Prostate gland (tissue), 2 donors: ENCODE measurements at regions of chr12 and their contacts with region 1.

Region 1: DNA sequence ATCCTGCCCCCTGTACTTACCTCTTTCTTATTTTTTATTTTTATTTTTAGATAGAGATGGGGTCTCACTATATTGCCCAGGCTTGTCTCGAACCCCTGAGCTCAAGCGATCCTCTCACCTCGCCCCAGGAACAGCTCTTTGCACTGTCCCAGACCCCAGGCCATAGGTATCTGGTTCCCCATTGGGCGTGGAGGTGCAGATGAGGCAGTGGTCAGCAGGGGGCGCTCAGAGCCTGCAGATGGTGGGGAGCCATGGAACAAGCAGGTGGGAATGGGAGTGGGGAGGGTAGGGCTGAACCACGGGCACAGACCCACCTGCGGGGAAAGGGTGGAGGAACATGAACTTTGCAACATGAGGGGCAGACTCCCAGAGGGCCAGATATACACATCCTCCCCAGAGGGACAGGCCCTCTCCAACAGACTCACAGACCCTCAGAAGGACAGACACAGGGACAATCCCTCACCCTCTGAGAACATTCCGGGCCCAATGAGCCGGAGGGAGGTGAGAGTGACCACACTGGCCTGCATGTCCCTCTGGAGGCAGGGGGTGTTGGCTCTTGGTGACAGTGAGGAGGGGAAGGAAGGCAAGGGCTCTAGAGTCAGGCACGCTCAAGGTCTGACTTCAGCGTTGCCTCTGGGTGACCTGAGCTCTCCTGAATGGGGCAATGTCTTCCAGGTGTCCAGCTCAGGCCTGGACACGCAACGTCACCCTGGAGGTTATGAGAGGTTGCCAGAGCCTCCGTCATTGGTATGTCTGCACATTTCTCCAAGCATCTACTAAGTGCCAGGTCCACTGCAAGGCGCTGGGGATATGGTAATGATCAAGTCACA is 34.9 kb downstream of the KRT80 start:
- DNase-seq: peak; percentile 77
- H3K4me3 ChIP-seq: no peak overlapping the region
- H3K27ac ChIP-seq: no peak overlapping the region
- H3K4me1 ChIP-seq: no peaks in the 10 kb centered on the region
- H3K27me3 ChIP-seq: no peaks in the 10 kb centered on the region
- CTCF ChIP-seq: peak; percentile 91 to 98 (median 94)
- POLR2A ChIP-seq: no peak

Region 2: GRCh38 chr12:52327052-52327829 is 170.3 kb after region 1 on chr12:
- intact Hi-C with region 1: loop called (anchors 2 kb)
- DNase-seq: peak; percentile 86
- H3K4me3 ChIP-seq: no peak overlapping the region
- H3K27ac ChIP-seq: no peak overlapping the region
- H3K4me1 ChIP-seq: no peaks in the 10 kb centered on the region
- H3K27me3 ChIP-seq: no peaks in the 10 kb centered on the region
- CTCF ChIP-seq: peak; percentile 59 to 94 (median 88)
- POLR2A ChIP-seq: no peak

Region 3: DNA sequence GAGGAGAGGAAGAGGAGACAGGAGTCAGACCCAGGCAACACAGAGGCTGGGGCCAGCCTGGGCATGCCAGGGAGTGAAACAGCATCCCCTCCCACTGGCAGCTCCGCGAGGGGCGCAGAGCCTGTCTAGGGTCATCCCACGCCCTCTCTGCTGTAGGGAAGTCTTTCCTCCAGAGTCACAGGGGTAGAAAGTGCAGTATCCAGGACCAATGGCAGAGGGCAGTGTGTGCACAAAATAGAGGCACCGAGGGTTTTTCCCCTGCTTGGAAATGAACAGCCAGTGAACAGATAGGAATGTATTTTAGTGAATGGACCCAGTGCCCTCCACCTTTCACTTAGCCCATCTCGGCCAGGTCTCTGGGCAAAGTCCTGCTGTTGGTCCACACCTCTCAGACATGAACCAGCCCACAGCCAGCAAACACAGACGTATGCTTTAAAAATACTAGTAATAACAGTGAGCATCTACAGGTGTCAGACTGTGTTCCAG is 426.1 kb after region 1 on chr12:
- intact Hi-C with region 1: loop called (anchors 5 kb)
- DNase-seq: peak; percentile 72
- H3K4me3 ChIP-seq: no peak overlapping the region
- H3K27ac ChIP-seq: no peak overlapping the region
- H3K4me1 ChIP-seq: no peaks in the 10 kb centered on the region
- H3K27me3 ChIP-seq: no peaks in the 10 kb centered on the region
- CTCF ChIP-seq: peak; percentile 41 to 92 (median 78)
- POLR2A ChIP-seq: no peak

Region 4: DNA sequence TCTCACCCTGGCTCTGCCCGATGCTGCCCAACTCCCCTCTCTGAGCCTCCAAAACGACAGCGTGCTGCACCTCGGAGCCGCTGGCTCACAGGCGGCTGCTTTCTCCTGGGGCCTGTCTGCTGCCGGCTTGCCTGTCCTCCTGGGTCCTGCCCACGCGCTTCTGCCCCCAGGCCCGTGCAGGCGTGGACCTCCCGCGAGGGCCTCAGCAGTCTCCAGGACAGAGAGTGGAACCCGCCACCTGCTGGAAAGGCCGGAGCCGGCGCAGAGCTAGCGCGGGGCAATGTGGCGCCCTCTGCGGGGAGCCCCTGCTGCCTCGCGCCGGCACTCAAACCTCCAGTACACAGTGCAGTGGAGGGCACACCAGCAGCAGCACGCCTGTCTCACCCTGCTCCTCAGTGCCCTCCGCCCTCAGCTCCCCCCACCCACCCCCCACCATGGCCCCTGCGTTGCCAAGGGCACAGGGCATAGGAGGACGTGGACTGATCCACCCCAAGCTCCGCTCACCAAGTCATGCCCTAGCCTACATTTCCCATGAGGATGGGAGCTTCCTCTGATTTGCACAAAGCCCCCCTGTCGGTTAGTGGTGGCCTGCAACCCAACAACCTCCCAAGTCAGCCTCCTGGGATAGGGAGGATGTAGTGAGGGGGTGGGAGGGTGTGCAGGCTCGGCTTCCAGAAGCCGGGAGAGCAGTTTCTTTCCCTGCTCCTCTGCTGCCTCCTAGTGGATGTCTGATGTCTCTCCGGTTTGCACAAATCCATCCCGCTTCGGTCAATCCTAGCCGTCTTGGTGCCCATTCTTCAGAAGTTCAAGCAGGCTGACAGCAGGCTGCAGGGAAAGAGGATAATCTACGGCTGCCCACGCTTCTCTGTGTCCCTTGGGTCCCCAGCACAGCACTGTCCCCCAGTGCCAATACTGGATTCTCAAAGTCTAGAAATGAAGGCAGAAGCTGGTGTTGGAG is 722.7 kb after region 1 on chr12:
- intact Hi-C with region 1: loop called (anchors 2 kb)
- DNase-seq: peak; percentile 89
- H3K4me3 ChIP-seq: no peak overlapping the region
- H3K27ac ChIP-seq: peak overlapping the region; percentile 53 to 69
- H3K4me1 ChIP-seq: no peaks in the 10 kb centered on the region
- H3K27me3 ChIP-seq: no peaks in the 10 kb centered on the region
- CTCF ChIP-seq: peak in 3 of 4 experiments; percentile 89 to 94 (median 90)
- POLR2A ChIP-seq: no peak